ENCODE measurements at regions of chr18 and their contacts with region 1.

Region 1: DNA sequence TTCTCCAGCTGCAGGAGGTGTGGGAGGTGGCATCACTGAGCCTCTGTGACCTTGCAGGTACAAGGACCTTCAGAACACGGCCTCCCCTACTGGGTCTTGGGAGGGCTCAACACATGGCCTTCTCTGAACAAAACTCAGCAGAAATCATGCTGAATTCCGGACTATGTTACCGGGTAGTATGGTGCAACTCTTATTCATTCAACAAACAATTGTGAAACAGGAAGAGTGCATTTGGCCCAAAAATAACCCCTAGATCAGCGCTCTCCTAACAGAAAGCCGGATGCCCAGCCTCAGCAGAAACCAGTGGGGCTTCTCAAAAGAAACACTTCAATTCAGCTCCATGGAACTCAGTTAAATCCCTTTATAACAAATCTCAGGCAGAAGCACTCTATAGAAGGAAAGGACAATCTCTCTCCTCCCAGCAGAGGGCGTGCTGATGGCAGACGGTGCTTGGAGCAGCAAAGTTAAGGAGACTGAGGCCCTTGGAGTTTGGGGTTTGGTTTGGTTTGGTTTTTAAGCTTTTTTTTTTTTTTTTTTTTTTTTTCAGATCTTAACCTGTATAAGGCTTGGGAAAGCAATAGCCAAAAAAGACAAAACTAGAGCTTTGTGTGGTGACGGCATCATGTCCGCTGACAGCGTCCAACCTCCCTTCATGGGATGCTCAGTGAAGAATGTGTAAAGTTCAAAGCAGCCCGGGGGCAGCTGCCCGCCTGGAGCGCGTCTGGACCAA is 104.2 kb upstream of the SALL3 start:
- DNase-seq: peak in 6 of 10 donors; percentile 32 to 85 (median 51)

Region 2: DNA sequence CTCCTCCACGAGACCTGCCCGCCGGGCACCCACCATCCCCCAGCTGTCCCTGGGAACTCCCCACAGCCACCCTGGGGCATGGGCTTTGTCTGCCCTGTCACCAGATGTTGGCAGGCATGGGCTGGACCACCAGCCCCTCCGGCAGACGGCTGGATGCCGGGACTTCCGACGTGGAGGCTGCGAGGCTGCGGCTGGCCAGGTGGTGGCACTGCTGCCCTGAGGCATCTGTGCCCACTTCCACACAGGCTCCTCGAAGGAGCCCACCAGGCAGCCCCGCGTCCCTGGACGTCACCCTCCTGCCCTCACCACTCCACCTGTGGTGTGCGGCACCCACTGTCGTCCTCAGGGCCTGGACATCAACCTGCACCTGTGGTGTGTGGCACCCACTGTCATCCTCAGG is 215.7 kb before region 1 on chr18:
- intact Hi-C with region 1: loop called (anchors 10 kb)
- DNase-seq: peak in 5 of 10 donors; percentile 10 to 83 (median 31)

Measured in posterior cingulate gyrus (tissue), 11 donors.